OCI-LY7 (cell line): ENCODE measurements at regions of chr11 and their contacts with region 1.

Region 1: GRCh38 chr11:58579192-58580129 is 598 bp downstream of the ZFP91 start:
- DNase-seq: peak; percentile 92
- H3K4me3 ChIP-seq: peak overlapping the region; percentile 87
- H3K27ac ChIP-seq: peak overlapping the region; percentile 95
- H3K4me1 ChIP-seq: peaks cover 50% of the 10 kb centered on the region
- CTCF ChIP-seq: peak; percentile 73

Region 2: GRCh38 chr11:57324886-57325734 is 1254.4 kb before region 1 on chr11 and contains the start of gene TNKS1BP1:
- CTCF ChIA-PET with region 1: no interaction called
- POLR2A ChIA-PET with region 1: no interaction called
- intact Hi-C with region 1: loop called (anchors 5 kb)
- DNase-seq: peak; percentile 96
- H3K4me3 ChIP-seq: peak within 1 kb of the TSS; percentile 70
- H3K27ac ChIP-seq: peak within 1 kb of the TSS; percentile 86
- H3K4me1 ChIP-seq: peaks cover 28% of the 10 kb centered on the region
- CTCF ChIP-seq: no peak
- total RNA-seq, gene TNKS1BP1: 5.3 and 6.4 TPM in 2 replicates

Region 3: DNA sequence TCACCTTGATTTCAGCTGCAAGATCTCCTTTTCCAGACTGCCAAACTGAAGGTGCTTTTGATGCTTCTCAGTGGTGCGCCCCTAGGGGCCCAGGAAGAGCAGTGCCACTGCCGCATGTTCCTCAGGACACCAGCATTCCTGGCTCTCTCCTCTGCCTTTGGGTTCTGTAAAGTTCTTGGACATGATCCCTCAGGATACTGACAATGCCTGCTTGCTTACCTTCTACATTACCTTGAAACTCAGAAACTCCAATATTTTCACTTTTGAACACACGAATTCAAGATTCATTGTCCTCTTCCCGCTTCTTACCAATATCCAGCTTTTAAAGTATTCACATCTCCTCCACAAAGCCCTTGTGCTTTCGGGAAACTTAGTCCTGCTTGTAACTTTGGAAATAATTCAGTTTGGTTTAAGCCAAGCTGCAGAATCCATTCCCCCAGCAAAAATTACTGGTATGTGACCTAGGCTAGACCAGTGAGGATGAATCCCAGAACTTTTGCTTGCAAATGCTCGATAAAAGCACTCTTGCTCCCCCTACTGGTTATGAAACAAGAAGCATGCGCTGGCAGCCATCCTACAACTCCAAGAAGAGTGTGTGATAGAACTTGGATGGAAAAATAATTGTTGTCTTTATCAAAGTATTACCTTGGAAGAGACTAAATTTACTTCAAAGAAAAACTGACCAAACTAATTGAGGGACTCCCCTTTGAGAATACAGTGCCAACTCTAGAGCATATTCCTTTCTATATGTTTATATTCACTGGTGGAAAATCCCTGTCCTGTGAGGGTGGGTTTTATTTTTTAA is 55.0 kb before region 1 on chr11:
- CTCF ChIA-PET with region 1: no interaction called
- POLR2A ChIA-PET with region 1: interaction called, 6 read pairs
- intact Hi-C with region 1: loop called (anchors 1 kb)
- DNase-seq: peak; percentile 81
- H3K4me3 ChIP-seq: peak overlapping the region; percentile 22
- H3K27ac ChIP-seq: peak overlapping the region; percentile 85
- H3K4me1 ChIP-seq: peaks cover 39% of the 10 kb centered on the region
- CTCF ChIP-seq: peak; percentile 98

Region 4: DNA sequence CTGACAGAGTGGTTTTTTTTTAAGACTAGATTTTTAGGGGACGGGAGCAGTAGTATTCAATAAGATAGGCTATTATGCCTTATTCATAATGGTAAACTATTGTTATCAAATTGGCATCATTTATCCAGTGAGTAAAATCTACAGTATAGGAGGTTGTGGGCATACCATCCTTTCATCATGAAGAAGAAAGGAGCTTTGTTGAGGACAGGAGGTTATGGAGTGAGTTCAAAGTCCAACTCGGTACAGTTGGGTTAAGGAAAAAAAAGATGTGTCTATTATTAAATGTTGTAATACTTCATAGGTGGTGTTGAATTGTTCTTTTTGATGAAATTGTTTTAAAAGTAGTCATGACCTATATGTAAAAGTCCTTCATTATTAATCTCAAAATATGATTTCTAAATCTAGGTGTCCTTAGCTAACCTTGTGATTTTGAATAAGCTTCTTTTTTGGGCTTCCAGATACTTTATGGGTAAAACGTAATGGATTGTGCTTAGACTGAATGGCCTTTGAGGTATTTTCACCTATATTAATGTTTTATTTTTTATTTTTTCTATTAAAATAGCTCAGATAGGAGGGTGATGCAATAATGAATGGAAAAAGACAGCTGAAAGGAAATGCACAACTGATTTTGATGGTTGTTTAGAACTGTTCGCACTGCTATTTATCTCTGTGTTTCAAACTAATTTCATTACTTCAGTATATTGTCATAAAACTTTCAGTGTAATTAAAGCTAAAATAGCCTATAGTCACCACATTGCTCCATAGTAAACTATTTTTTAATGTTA is 27.7 kb after region 1 on chr11:
- CTCF ChIA-PET with region 1: no interaction called
- POLR2A ChIA-PET with region 1: interaction called, 12 read pairs
- intact Hi-C with region 1: no loop called
- DNase-seq: no peak
- H3K4me3 ChIP-seq: no peak overlapping the region
- H3K27ac ChIP-seq: no peak overlapping the region
- H3K4me1 ChIP-seq: peaks cover 26% of the 10 kb centered on the region
- CTCF ChIP-seq: no peak

Region 5: DNA sequence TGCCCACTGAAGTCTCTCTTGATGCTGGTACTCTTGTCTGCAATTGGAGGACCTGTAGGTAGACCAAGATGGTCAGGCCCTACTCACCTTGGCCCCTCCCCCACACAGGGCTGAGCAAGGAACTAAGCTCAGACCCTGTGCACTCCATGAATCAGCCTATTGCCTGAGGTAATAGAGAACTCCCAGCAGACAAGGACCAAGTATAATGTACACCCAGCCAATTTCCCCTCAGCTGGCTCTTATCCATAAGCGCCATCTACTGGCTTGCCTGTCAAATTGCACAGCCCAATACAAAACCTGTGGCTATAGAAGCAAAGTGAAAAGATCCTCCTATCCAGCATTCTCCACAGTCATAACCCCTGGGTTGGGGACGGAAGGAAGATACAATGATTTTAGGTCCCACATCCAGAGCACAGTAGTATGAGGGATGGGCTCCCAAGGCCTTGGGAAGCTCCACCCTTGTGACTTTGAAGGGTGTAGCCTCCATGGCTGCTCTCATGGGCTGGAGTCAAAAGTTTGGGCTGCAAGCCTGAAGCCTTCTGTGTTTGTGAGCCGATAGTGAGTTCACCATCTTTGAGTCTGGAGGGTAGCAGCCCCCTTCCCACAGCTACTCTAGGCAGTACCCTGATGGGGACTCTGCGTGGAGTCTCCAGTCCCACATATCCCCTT is 209.0 kb after region 1 on chr11:
- CTCF ChIA-PET with region 1: no interaction called
- POLR2A ChIA-PET with region 1: no interaction called
- intact Hi-C with region 1: loop called (anchors 5 kb)
- DNase-seq: peak; percentile 66
- H3K4me3 ChIP-seq: no peak overlapping the region
- H3K27ac ChIP-seq: no peak overlapping the region
- H3K4me1 ChIP-seq: no peaks in the 10 kb centered on the region
- CTCF ChIP-seq: peak; percentile 92

Region 6: DNA sequence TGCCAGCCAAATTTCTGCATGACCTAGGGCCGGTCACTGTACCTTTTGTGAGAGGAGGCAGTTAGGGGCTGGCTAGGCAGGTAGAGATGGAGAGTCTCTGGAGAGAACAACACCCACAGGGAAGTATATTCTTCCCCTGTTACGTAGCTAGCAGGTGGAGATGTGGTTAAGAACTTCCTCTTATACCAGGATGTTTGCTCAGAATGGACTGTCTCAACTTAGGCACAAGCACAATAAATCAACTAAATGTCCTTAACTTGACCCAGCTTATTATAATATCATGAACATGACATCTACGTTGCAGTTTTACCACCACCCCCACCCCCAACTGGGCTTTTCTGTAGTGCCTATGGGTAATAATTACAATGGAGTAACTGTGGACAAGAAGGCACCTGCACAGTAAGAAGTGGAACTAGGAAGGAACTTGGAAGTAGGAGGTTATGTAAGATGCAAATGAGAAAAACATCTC is 693.9 kb after region 1 on chr11:
- CTCF ChIA-PET with region 1: no interaction called
- POLR2A ChIA-PET with region 1: interaction called, 4 read pairs
- intact Hi-C with region 1: loop called (anchors 2 kb)
- DNase-seq: peak; percentile 97
- H3K4me3 ChIP-seq: peak overlapping the region; percentile 56
- H3K27ac ChIP-seq: peak overlapping the region; percentile 97
- H3K4me1 ChIP-seq: peaks cover 74% of the 10 kb centered on the region
- CTCF ChIP-seq: no peak